ENCODE measurements at regions of chr11 and their contacts with region 1.

Region 1: DNA sequence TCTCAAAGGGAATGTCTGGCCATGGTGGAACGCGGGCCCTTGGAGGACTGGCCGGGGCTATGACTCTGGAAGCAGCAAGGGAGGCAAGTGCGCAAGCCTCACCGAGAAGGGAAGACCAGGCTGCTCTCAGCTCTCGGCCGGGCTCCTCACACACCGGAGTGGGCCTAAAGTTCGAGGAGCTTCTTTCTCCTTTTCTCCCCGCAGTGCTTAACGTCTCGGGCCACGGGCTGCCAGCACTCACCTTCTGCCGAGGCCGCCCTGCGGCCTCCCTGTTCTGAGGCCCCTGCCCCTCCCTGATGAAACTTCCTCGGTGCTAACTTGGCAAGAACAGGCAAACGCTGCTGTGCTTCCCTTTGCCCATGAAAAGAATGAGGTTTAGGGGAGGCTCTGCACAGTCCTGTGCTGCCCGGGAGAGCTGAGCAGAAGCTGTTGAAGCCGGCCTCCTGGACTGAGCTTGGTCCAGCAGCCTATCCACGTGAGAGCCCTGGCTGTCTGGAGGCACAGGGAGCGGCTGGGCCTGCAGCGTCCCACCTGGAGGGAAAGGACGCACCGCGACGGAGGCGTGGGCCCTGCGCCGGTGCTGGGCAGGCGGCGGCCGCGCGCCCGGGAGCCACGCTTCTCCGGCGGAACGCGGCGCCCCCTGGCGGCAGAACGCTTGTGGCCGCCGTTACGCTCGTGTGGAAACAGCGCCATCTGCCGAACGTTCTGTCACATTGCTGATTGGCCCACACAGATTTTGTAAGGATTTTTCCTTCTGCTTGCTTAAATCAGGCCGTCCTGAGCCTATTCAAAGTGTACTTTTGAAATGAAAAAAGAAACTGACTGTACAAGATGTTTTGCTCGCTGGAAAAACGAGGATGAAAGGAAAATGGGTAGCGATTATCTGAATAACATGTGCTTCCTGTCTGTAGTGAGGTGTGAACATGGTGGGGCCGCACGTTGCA is 65.0 kb upstream of the TMEM45B start:
- DNase-seq: peak; percentile 86
- H3K4me3 ChIP-seq: peak overlapping the region; percentile 23
- H3K27ac ChIP-seq: peak overlapping the region; percentile 28
- H3K4me1 ChIP-seq: peaks cover 13% of the 10 kb centered on the region
- H3K27me3 ChIP-seq: no peaks in the 10 kb centered on the region
- CTCF ChIP-seq: peak; percentile 93

Region 2: GRCh38 chr11:128884703-128885338 is 865.8 kb before region 1 on chr11:
- CTCF ChIA-PET with region 1: no interaction called
- POLR2A ChIA-PET with region 1: no interaction called
- intact Hi-C with region 1: loop called (anchors 5 kb)
- DNase-seq: peak; percentile 81
- H3K4me3 ChIP-seq: no peak overlapping the region
- H3K27ac ChIP-seq: no peak overlapping the region
- H3K4me1 ChIP-seq: peaks cover 4% of the 10 kb centered on the region
- H3K27me3 ChIP-seq: peaks cover 6% of the 10 kb centered on the region
- CTCF ChIP-seq: peak; percentile 86

Region 3: GRCh38 chr11:128956401-128957201 is 794.0 kb before region 1 on chr11:
- CTCF ChIA-PET with region 1: no interaction called
- POLR2A ChIA-PET with region 1: no interaction called
- intact Hi-C with region 1: loop called (anchors 10 kb)
- DNase-seq: peak; percentile 84
- H3K4me3 ChIP-seq: no peak overlapping the region
- H3K27ac ChIP-seq: no peak overlapping the region
- H3K4me1 ChIP-seq: no peaks in the 10 kb centered on the region
- H3K27me3 ChIP-seq: no peaks in the 10 kb centered on the region
- CTCF ChIP-seq: peak; percentile 85

Region 4: GRCh38 chr11:129117595-129118350 is 632.8 kb before region 1 on chr11:
- CTCF ChIA-PET with region 1: no interaction called
- POLR2A ChIA-PET with region 1: no interaction called
- intact Hi-C with region 1: loop called (anchors 1 kb)
- DNase-seq: peak; percentile 87
- H3K4me3 ChIP-seq: no peak overlapping the region
- H3K27ac ChIP-seq: no peak overlapping the region
- H3K4me1 ChIP-seq: no peaks in the 10 kb centered on the region
- H3K27me3 ChIP-seq: no peaks in the 10 kb centered on the region
- CTCF ChIP-seq: peak; percentile 98

Region 5: GRCh38 chr11:129364143-129364654 is 386.4 kb before region 1 on chr11:
- CTCF ChIA-PET with region 1: interaction called, 17 read pairs
- POLR2A ChIA-PET with region 1: no interaction called
- intact Hi-C with region 1: loop called (anchors 1 kb)
- DNase-seq: peak; percentile 97
- H3K4me3 ChIP-seq: peak overlapping the region; percentile 10
- H3K27ac ChIP-seq: no peak overlapping the region
- H3K4me1 ChIP-seq: peaks cover 39% of the 10 kb centered on the region
- H3K27me3 ChIP-seq: no peaks in the 10 kb centered on the region
- CTCF ChIP-seq: peak; percentile 100

Region 6: DNA sequence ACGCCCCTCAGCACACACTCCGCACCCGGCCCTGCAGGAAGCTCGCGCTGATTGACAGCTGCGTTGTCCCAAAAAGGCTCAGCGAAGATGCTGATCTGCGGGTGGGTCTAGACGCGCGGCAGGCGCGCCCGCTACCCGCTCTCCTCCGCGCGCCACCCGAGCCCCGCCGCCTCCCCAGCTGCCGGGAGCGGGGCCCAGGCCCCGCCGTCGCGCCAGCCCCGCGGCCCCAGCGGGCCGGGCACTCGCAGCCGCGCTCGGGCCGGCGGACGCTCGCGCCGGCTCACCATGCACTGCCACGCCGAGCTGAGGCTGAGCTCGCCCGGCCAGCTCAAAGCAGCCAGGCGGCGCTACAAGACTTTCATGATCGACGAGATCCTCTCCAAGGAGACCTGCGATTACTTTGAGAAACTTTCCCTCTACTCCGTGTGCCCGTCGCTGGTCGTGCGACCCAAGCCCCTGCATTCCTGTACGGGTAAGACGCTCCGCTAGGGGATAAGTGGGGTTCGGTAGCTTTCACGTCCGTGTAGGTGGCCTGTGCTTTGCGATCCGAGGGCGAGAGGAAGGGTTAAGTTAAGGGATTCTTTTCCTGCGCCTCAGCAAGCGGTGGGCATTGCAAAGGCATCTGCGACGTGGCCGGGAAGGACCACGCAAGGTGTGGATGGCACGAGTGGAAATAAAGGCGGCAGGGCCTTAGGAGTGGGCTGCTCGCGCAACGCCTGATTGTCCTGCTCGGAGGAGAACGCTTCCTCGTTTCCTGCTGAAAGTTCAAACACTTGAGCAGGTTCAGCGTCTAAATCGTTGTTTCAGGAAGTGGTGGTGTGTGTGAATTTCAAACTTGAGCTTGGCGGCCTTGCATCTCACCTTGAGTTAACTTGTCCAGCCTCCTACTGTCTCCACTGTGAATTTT is 374.6 kb before region 1 on chr11 and contains the start of gene BARX2:
- CTCF ChIA-PET with region 1: interaction called, 17 read pairs
- POLR2A ChIA-PET with region 1: interaction called, 3 read pairs
- intact Hi-C with region 1: no loop called
- DNase-seq: peak; percentile 94
- H3K4me3 ChIP-seq: peak within 1 kb of the TSS; percentile 74
- H3K27ac ChIP-seq: peak within 1 kb of the TSS; percentile 95
- H3K4me1 ChIP-seq: peaks cover 49% of the 10 kb centered on the region
- H3K27me3 ChIP-seq: no peaks in the 10 kb centered on the region
- CTCF ChIP-seq: peak; percentile 70
- total RNA-seq, gene BARX2: 36.4 and 43.0 TPM in 2 replicates

Region 7: GRCh38 chr11:129543515-129544290 is 206.9 kb before region 1 on chr11:
- CTCF ChIA-PET with region 1: no interaction called
- POLR2A ChIA-PET with region 1: no interaction called
- intact Hi-C with region 1: loop called (anchors 1 kb)
- DNase-seq: peak; percentile 98
- H3K4me3 ChIP-seq: peak overlapping the region; percentile 23
- H3K27ac ChIP-seq: peak overlapping the region; percentile 97
- H3K4me1 ChIP-seq: peaks cover 43% of the 10 kb centered on the region
- H3K27me3 ChIP-seq: no peaks in the 10 kb centered on the region
- CTCF ChIP-seq: no peak

Measured in A673 (cell line).